Cardiac septum (tissue), 1 donor: ENCODE measurements at regions of chr5 and their contacts with region 1.

Region 1: DNA sequence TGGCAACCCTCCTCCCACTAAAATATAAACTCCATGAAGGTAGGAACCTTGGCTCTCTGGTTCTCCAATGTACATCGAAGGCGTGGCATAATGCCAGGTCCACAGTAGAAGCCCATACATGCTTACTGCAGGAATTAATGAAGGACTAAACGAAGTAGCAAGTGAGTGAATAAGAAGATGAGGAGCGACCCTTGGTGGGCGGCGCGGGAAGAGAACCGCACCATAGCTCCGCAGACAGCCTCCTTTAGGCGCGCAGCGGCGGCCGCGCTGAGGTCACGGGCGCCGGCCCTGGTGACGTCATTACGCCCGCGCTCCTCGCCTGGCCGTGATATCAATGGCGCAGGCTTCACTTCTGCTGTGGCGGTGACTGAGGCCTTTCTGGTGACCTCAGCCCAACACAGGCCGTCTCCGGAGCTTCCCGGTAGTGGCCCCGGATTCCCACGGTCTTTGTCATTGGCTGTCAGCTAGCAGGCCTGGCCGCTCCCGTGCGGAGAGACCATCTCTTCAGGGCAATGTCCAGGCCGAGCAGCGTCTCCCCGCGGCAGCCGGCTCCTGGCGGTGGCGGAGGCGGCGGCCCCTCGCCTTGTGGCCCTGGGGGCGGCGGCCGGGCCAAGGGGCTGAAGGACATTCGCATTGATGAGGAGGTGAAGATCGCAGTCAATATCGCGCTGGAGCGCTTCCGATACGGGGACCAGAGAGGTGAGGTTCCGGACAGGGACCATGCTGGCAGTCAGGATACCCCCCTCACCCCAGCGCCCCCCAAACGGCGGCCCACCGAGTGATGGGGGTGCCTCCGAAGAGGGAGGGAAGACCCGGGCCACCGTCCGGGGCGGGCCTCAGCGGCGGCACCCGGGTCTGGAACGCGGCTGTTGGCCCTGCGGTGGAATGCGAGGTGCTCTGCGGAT is at the start of gene YTHDC2:
- DNase-seq: peak; percentile 94
- total RNA-seq, gene YTHDC2: 15.6 TPM

Region 2: DNA sequence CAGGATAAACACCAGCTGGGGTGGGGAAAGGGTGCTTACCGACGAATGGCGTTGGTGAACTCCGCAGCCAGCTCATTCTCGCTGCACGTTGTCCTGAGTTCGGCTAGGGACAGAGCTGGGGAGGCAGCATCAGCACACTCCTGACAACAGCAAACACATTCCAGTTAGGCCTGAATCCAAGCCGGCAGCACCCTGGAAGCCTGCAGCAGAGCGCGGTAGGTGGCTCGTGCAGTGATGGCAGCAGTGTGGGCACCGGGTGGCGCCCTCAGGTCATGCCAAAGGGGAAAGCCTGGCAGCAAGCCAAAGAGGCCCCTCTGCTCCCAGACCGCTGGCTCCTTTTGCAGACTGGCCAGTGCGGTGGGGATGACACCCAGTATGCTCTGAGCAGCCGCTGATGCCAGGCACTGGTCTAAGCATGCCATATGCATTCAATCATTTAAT is 470.1 kb before region 1 on chr5:
- intact Hi-C with region 1: loop called (anchors 5 kb)
- DNase-seq: peak; percentile 82

Region 3: DNA sequence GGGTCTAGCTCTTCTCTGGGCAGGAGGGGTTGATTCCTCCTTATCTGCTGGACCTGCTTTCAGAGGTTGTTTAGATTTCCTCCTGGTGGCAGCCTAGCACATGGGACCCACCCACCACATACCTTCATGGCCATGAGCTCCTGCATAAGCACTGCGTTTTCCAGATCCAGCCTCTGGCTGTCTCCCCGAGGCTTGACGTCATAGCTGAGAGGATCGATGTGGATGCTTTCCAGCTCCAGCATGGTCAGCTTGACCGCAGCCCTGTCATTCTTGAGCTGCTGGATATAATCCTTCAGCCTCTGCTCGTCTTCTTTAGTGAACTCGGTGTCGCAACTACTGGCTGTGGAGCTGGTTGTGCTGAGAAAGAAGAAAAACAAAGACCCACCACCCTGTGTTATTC is 460.0 kb before region 1 on chr5:
- intact Hi-C with region 1: no loop called
- DNase-seq: no peak

Region 4: DNA sequence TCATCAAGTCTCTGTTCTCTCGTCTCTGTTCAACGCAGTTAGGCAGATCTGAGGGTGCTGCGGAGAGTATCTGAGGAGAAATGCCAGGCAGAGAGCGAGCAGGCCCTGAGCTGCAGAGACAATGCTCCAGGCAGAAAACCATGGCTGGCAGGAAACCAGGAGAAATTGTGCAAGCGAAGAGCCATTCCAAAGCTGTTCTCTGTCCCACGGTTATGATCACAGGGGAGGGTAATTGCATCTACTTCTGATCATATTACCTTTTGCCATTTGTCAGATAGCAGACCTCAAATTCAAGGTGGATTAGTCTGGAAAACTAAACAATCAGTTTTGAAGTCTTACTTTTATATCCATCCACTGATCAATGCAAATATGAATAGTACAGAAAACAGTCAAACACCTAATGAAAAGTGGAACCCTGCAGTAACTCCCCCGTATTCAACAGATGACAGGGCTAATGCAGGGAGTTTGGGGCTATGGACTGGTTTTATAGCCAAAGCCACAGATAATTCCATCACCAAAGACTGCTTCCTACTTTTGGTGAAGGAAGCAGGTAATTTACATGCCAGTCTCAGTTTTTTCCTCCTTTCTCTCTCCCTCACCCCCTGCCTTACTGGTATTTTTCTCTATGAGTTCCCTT is 309.0 kb before region 1 on chr5:
- intact Hi-C with region 1: loop called (anchors 5 kb)
- DNase-seq: no peak

Region 5: DNA sequence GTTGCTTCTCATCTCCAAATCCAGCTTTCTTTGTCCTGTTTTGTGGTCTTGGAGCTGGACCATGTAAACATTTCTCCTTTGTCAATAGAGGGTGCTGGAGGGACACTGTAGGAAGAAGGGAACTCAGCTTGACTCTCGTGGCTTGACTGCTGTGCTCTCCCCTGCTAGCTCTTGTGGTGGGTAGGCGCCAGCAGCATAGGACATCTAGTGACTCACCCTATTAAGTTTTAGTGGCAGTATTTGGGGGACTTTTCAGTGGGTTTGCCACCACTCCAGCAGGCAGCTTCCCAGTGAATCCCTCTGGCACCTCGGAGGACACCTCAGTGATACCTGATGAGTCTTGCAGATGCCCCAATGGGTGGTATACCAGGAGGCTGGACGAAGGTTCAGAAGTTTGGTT is 176.7 kb before region 1 on chr5:
- intact Hi-C with region 1: loop called (anchors 2 kb)
- DNase-seq: no peak

Region 6: DNA sequence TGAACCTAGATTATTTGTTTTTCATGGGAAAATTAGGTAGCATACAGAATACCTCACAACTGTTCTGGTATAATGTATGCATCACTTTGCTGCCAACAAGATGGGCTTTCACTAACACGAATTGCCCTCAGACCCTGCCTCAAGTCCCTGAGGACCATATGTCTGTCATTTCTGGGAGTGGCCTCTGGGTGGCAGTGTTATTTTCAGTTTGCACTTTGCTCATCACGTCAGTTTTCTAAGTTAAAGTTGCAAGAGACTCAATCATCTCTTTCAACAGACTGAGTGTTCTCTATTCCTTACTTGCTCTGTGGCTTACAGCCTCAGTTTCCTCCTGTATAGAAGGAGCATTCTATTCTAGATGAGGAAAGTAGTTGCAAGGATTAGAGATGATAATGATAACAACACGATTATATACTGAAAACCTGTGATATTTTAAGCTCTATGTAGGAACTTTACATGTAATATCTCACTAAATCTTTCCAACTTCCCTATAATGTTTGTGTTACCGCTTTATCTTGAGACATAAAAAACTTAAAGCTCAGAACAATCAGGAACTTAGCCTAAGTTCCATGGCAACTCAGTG is 134.6 kb before region 1 on chr5:
- intact Hi-C with region 1: loop called (anchors 2 kb)
- DNase-seq: no peak